ENCODE measurements at regions of chr15 and their contacts with region 1.

Region 1: GRCh38 chr15:90648137-90649070 is 68.7 kb upstream of the BLM start:
- DNase-seq: peak; percentile 80
- ATAC-seq: peak; percentile 82 to 88
- H3K4me3 ChIP-seq: no peak overlapping the region
- H3K27ac ChIP-seq: peak overlapping the region; percentile 71
- H3K4me1 ChIP-seq: peaks cover 25% of the 10 kb centered on the region
- H3K27me3 ChIP-seq: no peaks in the 10 kb centered on the region
- CTCF ChIP-seq: peak; percentile 94

Region 2: DNA sequence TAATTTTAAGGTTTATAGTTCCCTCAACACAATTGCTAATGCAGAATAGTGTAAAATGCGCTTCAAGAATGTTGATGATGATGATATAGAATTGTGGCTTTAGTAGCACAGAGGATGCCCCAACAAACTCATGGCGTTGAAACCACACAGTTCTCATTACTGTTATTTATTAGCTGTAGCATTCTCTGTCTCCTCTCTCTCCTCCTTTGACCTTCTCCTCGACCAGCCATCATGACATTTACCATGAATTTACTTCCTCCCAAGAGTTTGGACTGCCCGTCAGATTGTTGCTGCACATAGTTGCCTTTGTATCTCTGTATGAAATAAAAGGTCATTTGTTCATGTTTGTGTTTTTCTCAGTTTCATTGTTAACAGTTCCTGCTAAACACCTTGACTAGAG is 146.5 kb before region 1 on chr15:
- intact Hi-C with region 1: no loop called
- DNase-seq: no peak
- ATAC-seq: no peak
- H3K4me3 ChIP-seq: no peak overlapping the region
- H3K27ac ChIP-seq: no peak overlapping the region
- H3K4me1 ChIP-seq: peaks cover 10% of the 10 kb centered on the region
- H3K27me3 ChIP-seq: no peaks in the 10 kb centered on the region
- CTCF ChIP-seq: no peak

Region 3: DNA sequence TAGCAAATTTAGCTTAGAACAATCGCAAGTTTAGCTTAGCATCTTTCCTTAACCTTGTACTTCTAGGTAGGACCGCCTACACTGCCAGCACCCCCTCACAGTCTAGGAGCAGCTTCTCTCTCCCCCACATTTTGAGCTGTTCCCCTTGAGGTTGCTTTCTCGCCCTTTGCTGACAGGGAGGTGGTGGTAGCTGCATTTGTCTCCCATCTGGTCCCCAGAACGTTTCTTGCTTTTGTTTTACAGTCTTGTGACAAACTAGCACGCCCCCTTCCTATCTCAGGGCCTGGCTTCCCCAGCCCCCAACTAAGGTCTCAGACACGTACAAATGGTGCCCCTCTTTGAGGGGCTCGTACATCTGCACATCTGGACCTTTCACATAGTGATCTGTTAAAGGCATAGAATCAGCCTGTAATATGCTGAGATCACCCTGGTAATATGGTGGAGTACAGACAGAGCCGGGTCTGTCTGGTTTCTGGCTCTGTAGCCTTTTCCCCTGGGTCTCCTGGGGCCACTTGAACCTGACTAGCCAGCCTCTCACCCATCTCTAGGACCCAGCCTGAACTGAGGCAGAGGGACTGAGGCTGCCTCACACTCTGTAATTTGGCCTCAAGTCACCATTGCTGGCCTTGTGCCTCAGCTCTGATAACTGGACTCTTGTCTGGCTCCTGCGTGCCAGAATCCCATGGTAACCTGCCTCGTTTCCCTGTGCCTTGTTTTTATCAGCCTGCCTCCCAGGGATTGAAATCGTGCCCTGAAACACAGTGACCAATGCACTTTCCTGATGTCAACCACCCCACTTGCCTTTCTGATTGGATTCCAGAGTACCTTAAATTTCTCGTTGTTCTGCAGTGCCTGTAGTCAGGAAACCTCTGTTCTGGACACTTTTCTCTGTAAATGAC is 91.0 kb before region 1 on chr15:
- intact Hi-C with region 1: no loop called
- DNase-seq: peak; percentile 63
- ATAC-seq: peak; percentile 70 to 81
- H3K4me3 ChIP-seq: no peak overlapping the region
- H3K27ac ChIP-seq: peak overlapping the region; percentile 70
- H3K4me1 ChIP-seq: peaks cover 66% of the 10 kb centered on the region
- H3K27me3 ChIP-seq: no peaks in the 10 kb centered on the region
- CTCF ChIP-seq: no peak

Region 4: DNA sequence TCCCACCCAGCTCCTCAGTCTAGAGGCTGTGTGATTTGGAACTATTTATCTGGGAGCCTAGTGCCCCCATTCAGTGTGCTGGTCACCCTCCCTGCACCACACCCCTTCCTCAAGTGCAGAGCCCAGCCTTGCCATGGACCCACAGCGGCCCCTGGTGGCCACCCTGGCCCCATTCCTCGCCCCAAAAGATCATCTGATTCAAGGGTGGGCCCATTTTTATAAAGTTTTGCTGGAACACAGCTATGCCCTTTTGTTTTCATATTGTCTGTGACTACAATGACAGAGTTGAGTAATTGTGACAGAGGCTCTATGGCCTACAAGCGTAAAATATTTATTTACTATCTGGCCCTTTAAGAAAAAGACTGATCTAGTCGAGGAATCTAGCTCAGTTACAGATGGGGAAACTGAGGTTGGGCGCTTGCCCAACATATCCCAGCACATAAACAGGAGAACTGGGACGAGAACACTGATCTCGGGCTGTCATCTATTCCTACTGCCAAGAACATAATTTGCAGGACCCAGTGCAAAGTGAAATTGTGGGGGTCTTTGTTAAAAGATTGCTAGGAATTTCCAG is 237.7 kb after region 1 on chr15:
- intact Hi-C with region 1: loop called (anchors 5 kb)
- DNase-seq: peak; percentile 86
- ATAC-seq: peak; percentile 74 to 80
- H3K4me3 ChIP-seq: peak overlapping the region; percentile 77
- H3K27ac ChIP-seq: peak overlapping the region; percentile 97
- H3K4me1 ChIP-seq: peaks cover 38% of the 10 kb centered on the region
- H3K27me3 ChIP-seq: no peaks in the 10 kb centered on the region
- CTCF ChIP-seq: peak; percentile 98

Region 5: GRCh38 chr15:91007266-91007665 is 358.9 kb after region 1 on chr15:
- intact Hi-C with region 1: no loop called
- DNase-seq: no peak
- ATAC-seq: no peak
- H3K4me3 ChIP-seq: no peak overlapping the region
- H3K27ac ChIP-seq: no peak overlapping the region
- H3K4me1 ChIP-seq: no peaks in the 10 kb centered on the region
- H3K27me3 ChIP-seq: no peaks in the 10 kb centered on the region
- CTCF ChIP-seq: no peak

Measured in lower lobe of right lung (tissue), 2 donors.